ENCODE measurements at regions of chr6 and their contacts with region 1.

Region 1: DNA sequence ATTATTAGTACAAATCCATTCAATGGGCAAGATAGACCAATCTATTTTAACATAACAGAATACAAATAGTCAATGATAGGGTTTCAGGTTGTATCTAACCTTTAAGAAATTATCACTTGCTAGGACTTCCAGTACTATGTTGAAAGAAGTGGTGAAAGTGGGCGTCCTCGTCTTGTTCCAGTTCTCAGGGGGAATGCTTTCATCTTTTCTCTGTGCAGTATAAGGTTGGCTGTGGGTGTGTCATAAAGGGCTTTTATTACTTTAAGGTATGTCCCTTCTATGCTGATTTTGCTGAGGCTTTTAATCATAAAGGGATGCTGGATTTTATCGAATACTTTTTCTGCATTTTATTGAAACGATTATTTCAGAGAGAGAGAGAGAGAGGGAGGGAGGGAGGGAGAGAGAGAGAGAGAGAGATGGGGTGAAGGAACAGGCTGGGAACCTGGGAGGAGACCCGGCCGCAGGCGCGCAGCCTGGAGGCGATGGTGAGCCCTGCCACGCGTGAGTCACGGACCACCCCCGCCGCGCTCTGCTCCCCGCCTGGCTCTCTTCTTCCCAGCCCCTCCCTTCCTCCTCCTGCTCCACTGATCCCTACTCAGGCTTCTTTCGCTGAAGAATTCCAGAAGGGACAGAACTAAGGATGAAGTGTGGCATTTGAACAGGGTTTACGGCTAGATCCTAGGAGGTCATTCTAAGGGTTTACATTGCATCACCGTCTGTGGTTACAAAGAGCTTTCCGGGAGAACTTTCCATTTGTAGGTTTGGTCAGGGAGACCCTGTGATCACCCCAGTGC is 45.5 kb upstream of the HLA-E start:
- DNase-seq: no peak
- ATAC-seq: peak; percentile 50; the same call in 1 of the 2 replicates
- H3K4me3 ChIP-seq: no peak overlapping the region
- H3K27ac ChIP-seq: no peak overlapping the region
- H3K4me1 ChIP-seq: no peaks in the 10 kb centered on the region
- H3K27me3 ChIP-seq: peaks cover 79% of the 10 kb centered on the region
- CTCF ChIP-seq: no peak

Region 2: DNA sequence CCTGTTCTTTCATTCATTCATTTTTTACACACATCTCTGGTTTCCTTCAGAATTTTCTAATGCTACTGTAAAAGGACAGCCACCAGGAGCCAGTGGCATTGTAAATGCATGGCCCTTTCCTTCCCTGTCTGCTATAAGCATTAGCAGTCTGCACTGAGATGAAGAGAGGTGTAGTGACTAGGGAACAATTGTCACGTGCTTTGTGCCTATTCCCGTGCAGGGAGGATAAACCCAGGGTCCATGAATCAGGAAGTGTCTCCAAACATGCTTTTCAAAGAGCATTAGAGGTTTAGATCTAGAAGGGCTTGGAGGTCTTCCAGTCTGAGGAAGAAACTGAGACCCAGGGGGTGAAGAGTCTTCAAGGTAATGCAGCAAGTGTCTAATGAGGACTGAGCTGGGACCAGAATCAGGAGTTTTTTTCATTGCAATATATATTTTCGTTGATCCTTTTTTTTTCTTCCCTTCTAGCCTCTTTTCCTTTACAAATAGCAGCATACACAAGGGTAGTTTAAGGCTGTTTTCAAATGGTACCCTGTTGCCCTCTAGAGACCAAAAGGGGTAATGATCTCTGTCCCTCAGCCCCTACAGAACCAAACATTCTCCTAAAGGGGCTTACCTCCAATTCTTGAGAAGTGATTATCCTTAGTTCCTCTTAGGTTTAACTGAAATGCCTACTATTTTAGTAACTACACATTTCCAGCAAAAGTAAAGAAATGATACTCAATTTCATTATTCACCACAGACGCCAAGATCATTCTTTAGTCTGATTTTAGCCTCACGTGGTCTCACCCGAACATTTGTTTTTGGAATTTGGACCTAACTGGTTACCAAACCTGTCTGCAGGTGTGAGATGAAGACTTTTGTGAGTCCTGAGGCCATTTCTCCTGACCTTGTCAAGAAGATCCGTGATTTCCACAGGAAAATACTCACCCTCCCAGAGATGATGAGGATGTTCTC is 273.9 kb before region 1 on chr6:
- CTCF ChIA-PET with region 1: no interaction called
- POLR2A ChIA-PET with region 1: no interaction called
- intact Hi-C with region 1: no loop called
- DNase-seq: peak; percentile 78
- ATAC-seq: peak; percentile 88
- H3K4me3 ChIP-seq: no peak overlapping the region
- H3K27ac ChIP-seq: no peak overlapping the region
- H3K4me1 ChIP-seq: no peaks in the 10 kb centered on the region
- H3K27me3 ChIP-seq: peaks cover 12% of the 10 kb centered on the region
- CTCF ChIP-seq: peak; percentile 90

Region 3: DNA sequence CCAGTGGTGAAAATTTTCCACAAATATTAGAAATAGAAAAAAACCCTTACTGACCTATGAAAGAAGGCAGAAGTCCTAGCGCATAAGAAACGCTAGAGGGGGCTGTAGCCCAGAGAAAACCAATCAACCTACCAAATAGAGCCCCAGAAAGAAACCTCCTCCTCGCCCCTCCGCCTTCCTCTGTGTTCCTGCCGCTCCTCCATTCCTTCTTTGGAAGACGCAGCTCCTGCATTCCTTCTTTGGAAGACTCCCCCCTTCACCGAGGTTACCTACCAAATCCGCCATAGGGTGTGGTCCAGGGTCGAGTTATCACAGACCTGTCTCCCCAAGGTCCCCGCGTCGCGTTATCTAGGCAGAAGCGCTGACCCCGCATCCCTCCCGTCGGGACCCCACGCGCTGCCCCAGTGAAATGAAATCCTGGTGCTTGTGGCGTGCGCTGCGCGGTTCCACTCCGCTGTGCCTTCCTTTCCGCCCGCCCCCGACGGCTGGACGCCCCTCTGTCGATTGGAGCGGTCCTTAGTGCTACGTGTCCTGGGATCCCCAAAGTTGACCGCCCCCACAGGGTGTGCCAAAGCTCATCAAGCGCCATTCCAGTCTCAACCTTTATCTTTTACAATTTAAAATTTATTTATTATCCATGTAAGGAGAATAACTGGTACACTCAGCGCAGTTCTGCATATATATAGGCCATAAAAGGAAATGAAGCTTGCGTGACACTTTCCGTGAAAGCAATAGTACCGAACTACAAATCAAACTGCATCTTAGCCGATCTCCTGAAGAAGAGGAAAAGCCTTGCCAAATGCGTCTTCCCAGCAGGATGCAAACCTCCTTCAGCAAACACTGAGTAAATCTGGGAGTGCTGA is 85.9 kb before region 1 on chr6:
- CTCF ChIA-PET with region 1: no interaction called
- POLR2A ChIA-PET with region 1: no interaction called
- intact Hi-C with region 1: loop called (anchors 5 kb)
- DNase-seq: peak; percentile 77
- ATAC-seq: peak; percentile 91
- H3K4me3 ChIP-seq: peak overlapping the region; percentile 66
- H3K27ac ChIP-seq: no peak overlapping the region
- H3K4me1 ChIP-seq: no peaks in the 10 kb centered on the region; the same call in 1 of the 2 replicates
- H3K27me3 ChIP-seq: peaks cover 45% of the 10 kb centered on the region
- CTCF ChIP-seq: peak; percentile 81

Region 4: DNA sequence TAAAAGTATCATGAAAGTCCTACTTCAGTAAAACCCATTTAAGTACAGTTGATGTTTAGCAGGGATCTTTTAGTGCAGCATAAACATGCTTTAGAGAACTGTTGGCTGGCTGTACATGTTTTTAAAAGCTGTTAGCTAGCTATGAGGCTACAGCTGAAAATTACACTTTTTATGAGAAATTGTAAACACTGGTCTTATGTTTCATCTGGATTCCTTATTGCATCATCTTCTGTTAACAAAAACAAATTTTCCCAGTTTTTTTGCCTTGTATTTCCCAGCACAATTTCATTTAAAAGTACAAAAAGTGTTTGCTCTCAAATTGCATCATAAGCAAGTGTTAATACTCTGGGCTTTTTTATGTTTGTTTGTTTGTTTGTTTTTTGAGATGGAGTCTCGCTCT is 27.1 kb after region 1 on chr6:
- CTCF ChIA-PET with region 1: no interaction called
- POLR2A ChIA-PET with region 1: no interaction called
- intact Hi-C with region 1: no loop called
- DNase-seq: no peak
- ATAC-seq: no peak
- H3K4me3 ChIP-seq: no peak overlapping the region
- H3K27ac ChIP-seq: no peak overlapping the region
- H3K4me1 ChIP-seq: no peaks in the 10 kb centered on the region
- H3K27me3 ChIP-seq: peaks cover 37% of the 10 kb centered on the region
- CTCF ChIP-seq: no peak

Region 5: GRCh38 chr6:30556066-30556905 is 112.4 kb after region 1 on chr6 and contains the start of gene GNL1:
- CTCF ChIA-PET with region 1: no interaction called
- POLR2A ChIA-PET with region 1: no interaction called
- intact Hi-C with region 1: no loop called
- DNase-seq: peak; percentile 93
- ATAC-seq: peak; percentile 89
- H3K4me3 ChIP-seq: peak within 1 kb of the TSS; percentile 77
- H3K27ac ChIP-seq: peak within 1 kb of the TSS; percentile 77
- H3K4me1 ChIP-seq: peaks cover 20% of the 10 kb centered on the region
- H3K27me3 ChIP-seq: no peaks in the 10 kb centered on the region
- CTCF ChIP-seq: no peak
- total RNA-seq, gene GNL1: 34.7 and 46.7 TPM in 2 replicates